Activated CD4-positive, alpha-beta T cell treated with anti-CD3 and anti-CD28 coated beads, Interleukin-2, amount 10 ng/mL, durations not matched to agents 24 days and 14 days (primary cell): ENCODE measurements at regions of chr1 and their contacts with region 1.

Region 1: DNA sequence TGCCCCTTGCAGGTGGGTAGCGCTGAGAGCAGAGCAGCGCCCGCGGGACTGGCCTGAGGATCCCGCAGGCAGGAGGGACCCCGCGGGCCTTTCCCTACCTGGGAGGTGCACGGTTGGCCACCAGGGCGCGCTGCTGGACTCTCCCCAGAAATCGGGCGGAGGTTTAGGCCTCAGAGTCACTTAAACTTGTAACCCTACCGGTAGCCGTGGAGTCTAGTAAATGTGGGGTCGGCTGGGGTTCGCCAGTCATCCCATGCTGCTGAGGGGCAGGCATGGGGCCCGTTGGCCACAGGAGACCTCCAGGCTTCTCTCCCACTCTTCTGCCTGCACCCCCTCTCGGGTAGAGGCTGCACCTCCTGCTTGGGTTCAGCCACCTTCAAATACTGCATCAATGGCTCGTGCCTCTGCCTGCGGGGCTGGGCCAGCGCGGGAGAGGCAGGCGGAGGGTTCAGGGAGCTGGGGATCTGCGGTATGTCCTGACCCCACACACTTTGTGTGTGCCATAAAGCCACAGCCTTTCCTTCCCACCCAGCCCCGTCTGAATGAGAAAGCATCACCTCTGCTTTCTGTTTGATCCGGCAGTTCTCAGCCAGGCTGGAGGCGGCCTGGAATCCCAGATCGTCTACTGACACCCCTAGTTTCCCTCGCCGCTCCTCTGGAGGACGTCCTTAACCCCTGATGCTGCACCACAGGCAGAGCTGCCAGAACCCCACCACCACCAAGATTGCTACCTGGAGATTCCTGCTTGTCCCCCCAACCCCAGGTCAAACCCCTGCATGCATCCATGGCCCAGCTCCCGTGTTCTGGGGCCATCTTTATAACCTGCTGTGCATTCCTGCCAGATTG is 12.3 kb upstream of the GSTM4 start:
- DNase-seq: peak; percentile 97
- H3K4me3 Mint-ChIP-seq: no peak overlapping the region
- H3K27ac Mint-ChIP-seq: no peak overlapping the region
- H3K4me1 Mint-ChIP-seq: peaks cover 11% of the 10 kb centered on the region
- H3K27me3 Mint-ChIP-seq: peaks cover 10% of the 10 kb centered on the region

Region 2: DNA sequence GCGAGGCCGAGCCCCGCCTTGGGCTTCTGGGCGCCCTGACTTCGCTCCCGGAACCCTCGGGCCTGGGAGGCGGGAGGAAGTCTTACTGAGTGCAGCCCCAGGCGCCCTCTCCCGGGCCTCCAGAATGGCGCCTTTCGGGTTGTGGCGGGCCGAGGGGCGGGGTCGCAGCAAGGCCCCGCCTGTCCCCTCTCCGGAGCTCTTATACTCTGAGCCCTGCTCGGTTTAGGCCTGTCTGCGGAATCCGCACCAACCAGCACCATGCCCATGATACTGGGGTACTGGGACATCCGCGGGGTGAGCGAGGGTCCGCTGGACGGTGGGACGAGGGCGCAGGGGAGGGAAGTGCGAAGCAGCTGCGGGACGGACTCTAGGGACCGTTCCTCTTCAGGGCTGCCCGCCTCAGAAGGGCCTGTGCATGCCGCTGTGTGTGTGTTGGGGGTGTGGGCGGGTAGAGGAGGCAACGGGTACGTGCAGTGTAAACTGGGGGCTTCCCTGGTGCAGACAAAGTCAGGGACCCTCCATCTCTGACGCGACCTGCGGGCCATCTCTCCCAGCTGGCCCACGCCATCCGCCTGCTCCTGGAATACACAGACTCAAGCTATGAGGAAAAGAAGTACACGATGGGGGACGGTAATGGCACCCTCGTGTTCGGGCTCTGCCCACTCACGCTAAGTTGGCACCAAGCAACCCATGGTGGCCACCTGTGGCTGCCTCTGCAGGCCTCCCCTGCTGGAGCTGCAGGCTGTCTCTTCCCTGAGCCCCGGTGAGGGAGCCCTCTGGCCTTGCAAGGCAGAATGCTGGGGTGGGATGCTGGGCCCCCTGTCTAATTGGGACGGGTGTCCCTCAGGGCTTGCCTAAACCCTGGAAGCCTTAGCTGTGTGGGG is 44.2 kb after region 1 on chr1 and contains the start of gene GSTM1:
- intact Hi-C with region 1: loop called (anchors 2 kb)
- DNase-seq: peak; percentile 97
- H3K4me3 Mint-ChIP-seq: peak within 1 kb of the TSS; percentile 87
- H3K27ac Mint-ChIP-seq: peak within 1 kb of the TSS; percentile 94
- H3K4me1 Mint-ChIP-seq: peaks cover 22% of the 10 kb centered on the region
- H3K27me3 Mint-ChIP-seq: no peaks in the 10 kb centered on the region
- total RNA-seq, gene GSTM1: 92.2 and 94.2 TPM in 2 replicates

Region 3: DNA sequence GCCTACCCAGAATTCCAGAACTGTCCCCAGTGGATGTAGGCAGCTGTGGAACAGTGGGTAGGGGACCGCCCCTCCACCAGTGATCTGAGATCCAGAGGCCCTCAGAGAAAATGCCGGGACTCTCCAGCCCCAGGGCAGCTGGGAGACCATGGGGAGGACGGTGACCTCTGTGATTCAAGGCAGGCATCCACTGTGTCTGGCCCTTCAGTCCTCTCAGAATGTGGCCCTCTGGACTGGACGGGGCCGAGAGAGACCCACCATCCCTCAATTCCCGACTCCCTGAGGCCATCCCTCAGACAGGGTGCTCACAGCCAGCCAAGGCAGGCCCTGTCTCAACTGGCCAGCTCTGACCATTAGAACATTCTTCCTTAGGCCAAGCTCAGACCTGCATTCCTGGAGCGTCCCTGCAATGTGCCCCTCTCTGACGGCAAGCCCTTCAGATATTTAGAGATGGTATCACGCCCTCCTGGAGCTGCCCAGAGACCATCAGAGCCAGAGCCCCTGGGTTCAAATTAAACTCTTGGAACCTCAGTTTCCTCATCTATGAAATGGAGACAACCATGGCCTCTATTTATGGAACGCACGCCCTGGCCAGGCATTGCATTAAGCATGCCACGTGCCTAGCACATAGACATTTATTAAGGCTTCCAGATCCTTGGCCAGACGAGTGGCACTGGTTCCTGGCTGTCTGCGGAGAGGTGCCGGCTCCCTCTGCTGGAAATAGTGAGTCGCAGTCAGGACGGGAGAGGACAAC is 129.7 kb after region 1 on chr1:
- intact Hi-C with region 1: loop called (anchors 1 kb)
- DNase-seq: peak; percentile 91
- H3K4me3 Mint-ChIP-seq: no peak overlapping the region
- H3K27ac Mint-ChIP-seq: no peak overlapping the region
- H3K4me1 Mint-ChIP-seq: peaks cover 20% of the 10 kb centered on the region
- H3K27me3 Mint-ChIP-seq: peaks cover 3% of the 10 kb centered on the region

Region 4: GRCh38 chr1:109984456-109985275 is 341.1 kb after region 1 on chr1 and contains the start of gene AHCYL1:
- intact Hi-C with region 1: loop called (anchors 2 kb)
- DNase-seq: peak; percentile 100
- H3K4me3 Mint-ChIP-seq: peak within 1 kb of the TSS; percentile 99
- H3K27ac Mint-ChIP-seq: peak within 1 kb of the TSS; percentile 97
- H3K4me1 Mint-ChIP-seq: peaks cover 37% of the 10 kb centered on the region
- H3K27me3 Mint-ChIP-seq: peaks cover 1% of the 10 kb centered on the region
- total RNA-seq, gene AHCYL1: 67.1 and 75.3 TPM in 2 replicates

Region 5: DNA sequence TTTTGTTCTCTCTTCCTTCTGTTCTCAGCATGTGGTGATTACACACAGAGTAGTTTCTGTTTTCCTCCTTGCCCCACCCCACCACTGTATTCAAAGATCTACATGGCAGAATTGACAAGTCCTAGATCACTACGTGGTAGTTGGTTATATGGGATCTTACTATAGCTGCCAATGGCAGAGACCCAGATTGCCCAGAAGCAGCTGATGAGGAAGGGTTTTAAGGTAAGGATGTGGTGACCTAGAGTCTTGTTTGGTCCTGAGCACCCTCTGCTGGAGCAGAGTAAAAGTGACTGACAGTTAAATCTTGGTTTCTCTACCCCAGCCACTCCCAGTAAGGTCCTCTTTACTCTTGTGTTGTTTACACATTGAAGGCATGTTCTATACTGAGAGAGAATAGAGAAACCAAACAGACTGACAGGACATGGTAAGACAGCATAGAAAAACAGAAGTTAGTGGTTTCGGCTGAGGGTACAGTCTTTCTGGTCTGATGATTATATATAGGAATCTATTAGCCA is 368.0 kb after region 1 on chr1:
- intact Hi-C with region 1: loop called (anchors 1 kb)
- DNase-seq: peak; percentile 84
- H3K4me3 Mint-ChIP-seq: no peak overlapping the region
- H3K27ac Mint-ChIP-seq: peak overlapping the region; percentile 31
- H3K4me1 Mint-ChIP-seq: peaks cover 10% of the 10 kb centered on the region
- H3K27me3 Mint-ChIP-seq: no peaks in the 10 kb centered on the region